Activated B cell treated with CpG ODN at 0.5 μM for 24 hours (primary cell): ENCODE measurements at regions of chr19 and their contacts with region 1.

Region 1: DNA sequence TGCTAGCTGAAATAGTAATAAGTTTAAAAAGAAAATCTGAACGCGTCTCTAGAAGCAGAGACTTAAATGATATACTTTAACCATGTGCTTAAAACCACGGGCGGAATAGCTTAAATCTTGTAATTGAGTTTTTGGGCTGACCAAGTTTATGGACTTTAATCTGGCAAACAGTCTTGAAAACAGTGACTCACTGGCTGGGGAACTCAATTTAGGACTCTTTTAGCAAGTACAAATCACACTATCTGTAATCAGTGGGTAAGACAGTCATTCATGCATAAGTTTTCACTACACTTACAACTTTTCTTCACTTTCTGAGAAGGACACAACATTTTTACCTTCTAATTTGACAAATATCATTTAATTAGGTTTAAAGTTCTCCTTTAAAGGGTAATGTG is 26.8 kb downstream of the ZNF627 start:
- DNase-seq: no peak
- ATAC-seq: no peak
- H3K4me3 Mint-ChIP-seq: no peak overlapping the region
- H3K27ac Mint-ChIP-seq: no peak overlapping the region
- H3K4me1 Mint-ChIP-seq: peaks cover 18% of the 10 kb centered on the region
- H3K27me3 Mint-ChIP-seq: peaks cover 6% of the 10 kb centered on the region
- CTCF ChIP-seq: no peak

Region 2: DNA sequence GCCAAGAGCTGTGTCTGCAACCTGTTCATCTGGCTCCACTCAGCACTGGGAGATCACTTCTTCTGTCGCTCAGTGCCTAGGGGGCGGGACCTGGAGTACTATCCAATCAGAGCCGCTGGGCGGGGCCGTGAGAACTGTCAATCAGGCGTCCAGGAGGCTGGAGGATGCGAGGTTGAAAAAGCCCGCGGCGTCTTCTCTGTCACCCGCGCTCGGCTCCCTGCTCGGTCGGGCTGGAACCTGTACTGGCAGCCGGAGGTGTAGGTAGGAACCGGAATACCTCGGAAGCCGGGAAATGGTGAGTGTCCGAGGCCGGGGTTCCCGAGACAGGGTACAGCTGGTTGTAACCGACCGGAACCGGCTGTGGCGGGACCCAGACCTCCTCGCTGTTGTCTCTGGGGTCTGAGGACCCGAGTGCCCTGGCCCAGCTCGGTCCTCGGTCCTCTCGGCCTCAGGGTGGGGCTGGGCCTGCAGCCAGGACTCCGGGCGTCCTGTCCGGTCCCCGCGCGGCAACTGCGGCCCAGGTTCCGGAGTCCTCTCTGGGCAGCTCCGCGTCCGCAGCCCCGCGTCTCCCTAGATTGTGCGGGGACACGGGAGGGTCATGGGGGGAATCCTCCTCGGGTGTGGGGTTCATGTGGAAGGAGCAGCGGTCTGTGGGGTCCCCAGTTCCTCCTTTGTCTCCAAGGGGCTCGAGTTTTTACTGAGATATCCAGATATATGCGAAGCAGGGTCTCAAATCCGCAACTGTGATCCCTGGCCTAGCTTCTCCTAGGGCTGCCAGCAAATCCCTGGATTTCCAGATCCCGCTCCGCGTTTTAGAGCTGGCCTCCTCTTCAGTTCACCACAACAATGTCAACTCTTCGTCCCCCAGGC is 15.8 kb after region 1 on chr19:
- CTCF ChIA-PET with region 1: no interaction called
- POLR2A ChIA-PET with region 1: interaction called, 3 read pairs
- intact Hi-C with region 1: loop called (anchors 2 kb)
- DNase-seq: peak; percentile 87
- ATAC-seq: peak; percentile 100
- H3K4me3 Mint-ChIP-seq: peak overlapping the region; percentile 77
- H3K27ac Mint-ChIP-seq: no peak overlapping the region
- H3K4me1 Mint-ChIP-seq: peaks cover 5% of the 10 kb centered on the region
- H3K27me3 Mint-ChIP-seq: peaks cover 5% of the 10 kb centered on the region
- CTCF ChIP-seq: no peak

Region 3: GRCh38 chr19:11649941-11650340 is 25.9 kb after region 1 on chr19:
- CTCF ChIA-PET with region 1: no interaction called
- POLR2A ChIA-PET with region 1: no interaction called
- intact Hi-C with region 1: no loop called
- DNase-seq: no peak
- ATAC-seq: no peak
- H3K4me3 Mint-ChIP-seq: no peak overlapping the region
- H3K27ac Mint-ChIP-seq: no peak overlapping the region
- H3K4me1 Mint-ChIP-seq: no peaks in the 10 kb centered on the region
- H3K27me3 Mint-ChIP-seq: no peaks in the 10 kb centered on the region
- CTCF ChIP-seq: no peak